ENCODE measurements at regions of chr1 and their contacts with region 1.

Region 1: DNA sequence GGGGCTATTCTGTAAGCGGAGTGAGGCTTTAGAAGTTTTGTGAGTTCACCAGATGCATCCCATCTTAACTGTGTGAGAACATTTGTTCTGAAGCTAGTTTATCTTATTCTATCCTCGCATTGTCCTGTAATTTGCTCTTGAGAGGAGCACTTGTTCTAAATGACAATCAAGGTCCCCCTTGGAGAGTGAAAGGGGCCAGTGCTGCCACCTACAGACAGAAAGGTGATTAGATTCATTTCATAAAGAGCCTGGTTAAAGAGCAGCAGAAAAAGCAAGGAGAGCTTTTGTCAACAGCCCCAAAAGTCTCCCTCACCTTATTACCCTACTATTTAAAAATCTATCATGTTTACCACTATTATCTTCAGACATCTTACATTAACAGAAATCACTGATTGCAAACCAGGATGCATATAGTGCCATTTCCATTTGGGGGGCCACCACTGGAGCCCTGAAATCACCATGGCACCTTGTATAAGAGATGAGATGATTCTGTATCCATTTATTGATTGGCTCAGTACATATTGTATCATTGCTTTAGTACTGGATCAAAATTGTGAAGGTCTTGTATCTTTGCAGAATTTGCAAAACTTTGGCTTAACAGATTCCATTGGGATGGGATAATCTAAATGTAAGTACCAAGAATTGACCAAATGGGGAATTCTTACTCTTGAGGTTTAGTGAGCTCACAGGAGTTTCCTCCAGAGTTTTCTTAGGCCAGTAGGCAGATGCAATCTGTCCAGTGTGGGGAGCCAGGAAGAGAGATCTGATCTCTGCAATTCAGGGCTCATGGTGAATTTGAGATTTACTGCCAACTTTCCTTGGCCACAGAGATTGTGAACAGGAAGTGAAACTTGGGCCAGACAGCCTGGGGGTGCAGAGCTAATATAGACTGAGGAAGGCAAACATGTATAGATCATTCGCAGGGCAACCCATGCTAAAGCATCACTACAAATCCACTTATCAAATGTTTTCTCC is 64.3 kb upstream of the TRABD2B start:
- DNase-seq: peak; percentile 69
- H3K4me3 ChIP-seq: no peak overlapping the region; a peak in 1 of 4 replicates
- H3K27ac ChIP-seq: no peak overlapping the region; a peak in 1 of 4 replicates
- H3K4me1 ChIP-seq: no peaks in the 10 kb centered on the region; a peak in 1 of 4 replicates
- H3K27me3 ChIP-seq: no peaks in the 10 kb centered on the region
- CTCF ChIP-seq: peak; percentile 76
- EP300 ChIP-seq: no peak
- RAD21 ChIP-seq: peak; percentile 86

Region 2: GRCh38 chr1:47725992-47726855 is 335.2 kb before region 1 on chr1:
- CTCF ChIA-PET with region 1: interaction called, 21 read pairs
- POLR2A ChIA-PET with region 1: no interaction called
- DNase-seq: peak; percentile 89
- H3K4me3 ChIP-seq: peak overlapping the region; percentile 15 to 57; a peak in 3 of 4 replicates
- H3K27ac ChIP-seq: no peak overlapping the region
- H3K4me1 ChIP-seq: peaks cover 0 to 9% of the 10 kb centered on the region in 2 experiments; a peak in 1 of 4 replicates
- H3K27me3 ChIP-seq: peaks cover 28% of the 10 kb centered on the region
- CTCF ChIP-seq: peak; percentile 87
- EP300 ChIP-seq: no peak
- RAD21 ChIP-seq: peak; percentile 87

Region 3: GRCh38 chr1:47785561-47786271 is 275.7 kb before region 1 on chr1:
- CTCF ChIA-PET with region 1: interaction called, 25 read pairs
- POLR2A ChIA-PET with region 1: no interaction called
- DNase-seq: peak; percentile 61
- H3K4me3 ChIP-seq: no peak overlapping the region
- H3K27ac ChIP-seq: no peak overlapping the region
- H3K4me1 ChIP-seq: no peaks in the 10 kb centered on the region
- H3K27me3 ChIP-seq: no peaks in the 10 kb centered on the region
- CTCF ChIP-seq: peak; percentile 24; the same call in 1 of the 2 replicates
- EP300 ChIP-seq: no peak
- RAD21 ChIP-seq: peak; percentile 71

Region 4: DNA sequence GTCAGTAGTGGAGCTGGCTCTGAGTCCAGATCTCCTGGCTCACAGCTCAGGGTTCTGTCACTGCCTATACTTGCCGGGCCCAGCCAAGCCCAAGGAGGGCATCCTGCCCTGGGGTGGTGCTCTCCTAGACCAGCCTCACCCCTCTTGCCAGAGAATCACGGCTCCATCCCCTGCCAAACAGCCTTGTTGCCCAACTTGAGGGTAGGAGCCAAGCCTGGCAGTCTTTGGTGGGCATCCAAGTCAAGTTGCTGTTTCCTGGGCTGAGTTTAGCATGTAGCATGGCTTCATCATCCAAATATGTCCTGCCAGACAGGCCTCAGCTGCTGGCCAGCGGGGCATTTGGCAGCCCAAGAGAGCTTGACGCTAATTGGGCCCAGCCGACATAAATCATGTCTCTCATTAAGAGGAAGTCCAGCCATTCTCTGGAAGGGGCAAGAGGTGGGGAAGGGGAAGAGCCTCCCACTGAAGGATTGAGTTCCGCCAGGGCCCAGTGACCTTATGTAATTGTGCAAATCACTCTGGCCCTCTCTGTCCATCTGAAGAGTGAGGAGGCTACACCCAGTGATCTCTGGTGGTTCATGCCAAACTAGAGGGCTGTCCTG is 41.6 kb before region 1 on chr1:
- CTCF ChIA-PET with region 1: interaction called, 16 read pairs
- POLR2A ChIA-PET with region 1: no interaction called
- DNase-seq: no peak
- H3K4me3 ChIP-seq: no peak overlapping the region
- H3K27ac ChIP-seq: no peak overlapping the region
- H3K4me1 ChIP-seq: peaks cover 0 to 9% of the 10 kb centered on the region in 2 experiments; a peak in 1 of 4 replicates
- H3K27me3 ChIP-seq: no peaks in the 10 kb centered on the region
- CTCF ChIP-seq: no peak
- EP300 ChIP-seq: no peak
- RAD21 ChIP-seq: no peak

Region 5: GRCh38 chr1:48048064-48048463 is 13.4 kb before region 1 on chr1:
- CTCF ChIA-PET with region 1: interaction called, 25 read pairs
- POLR2A ChIA-PET with region 1: no interaction called
- DNase-seq: no peak
- H3K4me3 ChIP-seq: no peak overlapping the region
- H3K27ac ChIP-seq: peak overlapping the region in 1 of 2 experiments; percentile 2; a peak in 1 of 4 replicates
- H3K4me1 ChIP-seq: peaks cover 12 to 25% of the 10 kb centered on the region in 2 experiments; a peak in 2 of 4 replicates
- H3K27me3 ChIP-seq: no peaks in the 10 kb centered on the region
- CTCF ChIP-seq: no peak
- EP300 ChIP-seq: no peak
- RAD21 ChIP-seq: no peak

Region 6: GRCh38 chr1:48610628-48611542 is 549.4 kb after region 1 on chr1:
- CTCF ChIA-PET with region 1: no interaction called
- POLR2A ChIA-PET with region 1: no interaction called
- DNase-seq: peak; percentile 34
- H3K4me3 ChIP-seq: no peak overlapping the region
- H3K27ac ChIP-seq: peak overlapping the region in 1 of 2 experiments; percentile 55; a peak in 1 of 4 replicates
- H3K4me1 ChIP-seq: peaks cover 0 to 18% of the 10 kb centered on the region in 2 experiments; a peak in 2 of 4 replicates
- H3K27me3 ChIP-seq: no peaks in the 10 kb centered on the region
- CTCF ChIP-seq: no peak
- EP300 ChIP-seq: no peak
- RAD21 ChIP-seq: no peak